RWPE1 (cell line): ENCODE measurements at regions of chr1 and their contacts with region 1.

Region 1: DNA sequence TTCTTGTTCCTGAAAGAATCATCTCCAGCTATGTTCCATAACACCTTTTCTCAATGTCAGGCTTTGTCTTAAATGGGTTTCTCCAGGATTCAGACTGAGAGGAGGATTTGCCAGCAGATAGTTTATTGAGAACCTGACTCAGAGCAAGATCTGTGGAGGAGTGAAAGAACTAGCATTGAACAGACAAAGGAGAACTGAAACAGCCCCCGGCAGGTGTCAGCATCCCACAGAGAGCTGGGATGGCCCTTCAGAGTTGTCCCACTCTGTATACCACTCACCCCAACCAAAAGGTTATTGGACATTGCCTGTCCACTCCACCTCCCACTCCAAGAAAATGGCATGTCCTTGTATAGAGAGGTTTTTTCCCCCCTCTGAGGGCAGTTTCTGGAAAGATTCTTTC is 270.7 kb downstream of the PAPPA2 start:
- DNase-seq: no peak
- H3K27ac ChIP-seq: no peak overlapping the region
- CTCF ChIP-seq: no peak

Region 2: DNA sequence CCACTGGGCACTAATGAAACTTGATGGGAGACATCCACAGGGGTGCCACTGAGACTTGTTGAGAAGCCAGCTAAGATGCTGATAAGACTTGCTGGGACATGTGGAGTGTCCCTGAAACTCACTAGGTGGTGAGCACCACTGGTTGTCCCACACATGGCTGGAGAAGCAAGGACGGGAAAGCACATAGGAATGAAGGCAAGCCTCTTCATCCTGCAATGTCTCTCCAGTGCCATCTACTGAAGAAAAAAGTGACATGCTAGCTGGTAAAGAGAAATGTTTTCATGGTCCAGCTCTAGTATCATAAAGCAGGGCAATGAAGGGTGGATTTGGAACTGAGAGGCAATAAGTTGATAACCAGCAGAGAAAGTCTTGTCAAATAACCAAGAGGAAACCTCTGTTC is 12.3 kb after region 1 on chr1:
- CTCF ChIA-PET with region 1: no interaction called
- POLR2A ChIA-PET with region 1: no interaction called
- DNase-seq: no peak
- H3K27ac ChIP-seq: no peak overlapping the region
- CTCF ChIP-seq: no peak

Region 3: GRCh38 chr1:176765608-176766007 is 31.9 kb after region 1 on chr1:
- CTCF ChIA-PET with region 1: interaction called, 10 read pairs
- POLR2A ChIA-PET with region 1: no interaction called
- DNase-seq: no peak
- H3K27ac ChIP-seq: no peak overlapping the region
- CTCF ChIP-seq: no peak